ENCODE measurements at regions of chr10 and their contacts with region 1.

Region 1: GRCh38 chr10:119872860-119873681 is 428 bp upstream of the MCMBP start:
- DNase-seq: peak; percentile 90
- ATAC-seq: peak; percentile 97 to 98

Region 2: GRCh38 chr10:119737827-119738226 is 135.2 kb before region 1 on chr10:
- intact Hi-C with region 1: no loop called
- DNase-seq: no peak
- ATAC-seq: peak; percentile 61 to 98

Region 3: DNA sequence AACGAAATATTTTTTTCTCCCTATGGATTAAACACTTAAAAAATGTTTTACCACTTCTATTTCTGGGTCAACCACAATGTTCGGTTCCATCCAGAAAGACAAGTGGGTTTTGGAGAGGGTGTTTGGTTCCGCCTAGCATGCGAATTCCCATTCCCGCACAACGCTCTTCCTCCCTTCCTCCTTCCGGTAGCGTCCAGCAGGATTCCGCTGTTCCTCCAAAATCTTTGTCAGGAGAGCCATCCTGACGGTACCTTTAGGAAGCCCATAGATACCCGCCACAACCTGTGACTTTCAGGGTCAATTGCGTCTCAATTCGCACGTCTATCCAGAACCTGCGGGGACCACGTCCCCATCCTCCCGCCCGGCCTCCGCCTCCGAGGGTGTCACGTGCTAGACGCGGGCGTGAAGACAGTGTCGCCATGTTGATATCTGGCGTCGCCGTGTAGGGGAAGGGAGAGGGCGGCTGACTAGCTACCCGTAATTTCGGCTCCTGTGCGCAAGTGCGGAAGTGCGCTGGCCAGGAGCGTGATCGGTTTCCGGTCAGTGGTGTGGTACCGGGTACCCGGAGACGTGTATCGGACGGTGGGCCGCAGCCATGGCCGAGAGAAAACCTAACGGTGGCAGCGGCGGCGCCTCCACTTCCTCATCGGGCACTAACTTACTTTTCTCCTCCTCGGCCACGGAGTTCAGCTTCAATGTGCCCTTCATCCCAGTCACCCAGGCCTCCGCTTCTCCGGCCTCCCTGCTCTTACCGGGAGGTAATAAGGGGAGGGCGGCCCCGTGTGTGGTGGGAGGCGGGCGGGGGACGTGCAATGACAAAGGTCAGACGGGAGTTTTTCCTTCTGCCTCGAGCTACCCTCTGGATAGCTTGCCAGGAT is 19.4 kb after region 1 on chr10 and contains the start of gene SEC23IP:
- intact Hi-C with region 1: loop called in 1 of 2 experiments (anchors 2 kb)
- DNase-seq: peak; percentile 98
- ATAC-seq: peak; percentile 98 to 99
- total RNA-seq, gene SEC23IP: 32.2 to 45.2 TPM